ENCODE measurements at regions of chr20 and their contacts with region 1.

Region 1: DNA sequence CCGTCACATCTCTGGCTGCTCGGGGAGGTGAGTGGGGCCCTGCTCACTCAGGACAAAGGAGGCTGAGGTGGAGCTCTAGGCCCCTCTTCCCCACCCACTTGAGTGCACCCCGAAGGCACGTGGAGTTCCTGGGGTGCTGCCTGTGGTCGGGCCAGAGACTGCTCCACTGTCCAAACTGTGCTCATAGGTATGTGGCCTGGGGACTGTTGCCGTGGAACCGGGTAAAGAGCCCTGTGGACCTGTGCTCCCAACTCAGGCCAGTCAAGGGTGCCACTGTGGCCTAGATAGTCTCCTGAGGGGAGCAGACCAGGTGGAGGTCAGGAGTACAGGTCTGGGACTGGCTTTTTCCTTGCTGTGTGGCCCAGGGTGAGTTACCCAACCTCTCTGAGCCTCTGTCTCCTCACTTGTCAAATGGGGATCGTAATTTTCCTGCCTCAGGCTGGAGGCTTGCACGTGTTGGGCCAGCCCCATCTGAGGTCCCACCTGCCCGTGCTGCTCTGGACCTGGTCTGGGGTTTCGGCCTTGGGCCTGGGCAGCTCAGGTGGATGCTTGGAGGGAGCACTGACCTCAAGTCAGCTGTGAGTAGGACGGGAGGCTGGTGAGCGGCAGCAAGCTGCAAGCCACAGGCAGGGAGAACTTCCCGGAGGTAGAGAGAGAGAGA is 12.4 kb upstream of the NPBWR2 start:
- DNase-seq: no peak
- ATAC-seq: no peak
- H3K4me3 ChIP-seq: peak overlapping the region in 4 of 5 experiments; percentile 14 to 50 (median 40)
- H3K4me3 Mint-ChIP-seq: peak overlapping the region; percentile 77
- H3K27ac ChIP-seq: no peak overlapping the region
- H3K27ac Mint-ChIP-seq: peak overlapping the region; percentile 84
- H3K4me1 ChIP-seq: peaks cover 4 to 11% of the 10 kb centered on the region in 2 donors
- H3K4me1 Mint-ChIP-seq: peaks cover 8% of the 10 kb centered on the region
- H3K27me3 ChIP-seq: peaks cover 0 to 10% (median 0%) of the 10 kb centered on the region in 4 experiments
- H3K27me3 Mint-ChIP-seq: peaks cover 3% of the 10 kb centered on the region
- CTCF ChIP-seq: no peak

Region 2: DNA sequence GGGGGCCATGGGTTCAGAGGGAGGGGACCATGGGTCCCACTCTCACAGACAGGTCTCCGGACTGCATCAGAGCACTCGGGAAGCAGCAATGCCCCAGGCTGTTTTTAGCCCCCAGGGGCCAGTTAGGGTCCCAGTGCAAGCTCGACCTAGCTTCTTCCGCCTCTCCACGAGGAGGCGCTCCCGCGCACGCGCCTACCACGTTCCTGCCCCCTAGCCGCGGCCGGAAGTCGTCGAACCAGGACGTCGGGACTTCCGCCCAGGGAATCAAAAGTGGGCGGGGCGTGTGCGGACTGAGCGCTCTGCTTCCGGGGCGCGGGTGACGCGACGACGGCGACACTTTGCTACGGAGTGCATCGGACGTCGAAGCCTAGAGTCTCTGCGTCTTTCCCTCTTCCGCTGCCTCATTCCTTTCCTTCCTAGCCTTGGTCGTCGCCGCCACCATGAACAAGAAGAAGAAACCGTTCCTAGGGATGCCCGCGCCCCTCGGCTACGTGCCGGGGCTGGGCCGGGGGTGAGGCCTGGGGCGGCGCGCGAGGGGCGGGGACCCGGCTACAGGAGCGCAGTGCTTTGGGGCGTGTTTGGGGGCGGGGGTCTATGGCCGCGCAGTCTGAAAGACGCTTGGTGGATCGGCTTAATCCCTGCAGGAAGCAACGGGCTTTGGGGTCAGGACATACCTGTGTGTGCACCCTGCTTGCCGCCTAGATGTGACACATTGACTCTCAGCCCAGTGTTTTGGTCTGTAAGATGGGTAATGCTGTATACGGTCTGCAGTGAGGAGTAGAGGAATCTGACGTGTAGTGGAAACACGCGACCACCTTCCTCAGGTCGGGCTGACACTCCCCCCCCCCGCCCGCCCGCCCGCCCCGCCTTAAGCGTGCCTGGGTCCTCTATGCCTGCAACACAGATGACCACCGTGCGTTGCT is 138.7 kb before region 1 on chr20 and contains the start of gene PRPF6:
- CTCF ChIA-PET with region 1: interaction called, 25 read pairs
- POLR2A ChIA-PET with region 1: interaction called, 3 read pairs
- intact Hi-C with region 1: loop called (anchors 1 kb)
- DNase-seq: peak; percentile 96
- ATAC-seq: peak; percentile 72
- H3K4me3 ChIP-seq: peak within 1 kb of the TSS; percentile 63 to 85 (median 79)
- H3K4me3 Mint-ChIP-seq: peak within 1 kb of the TSS; percentile 90
- H3K27ac ChIP-seq: peak within 1 kb of the TSS; percentile 69 to 87
- H3K27ac Mint-ChIP-seq: peak within 1 kb of the TSS; percentile 94
- H3K4me1 ChIP-seq: peaks cover 30 to 46% of the 10 kb centered on the region in 2 donors
- H3K4me1 Mint-ChIP-seq: peaks cover 53% of the 10 kb centered on the region
- H3K27me3 ChIP-seq: no peaks in the 10 kb centered on the region
- H3K27me3 Mint-ChIP-seq: no peaks in the 10 kb centered on the region
- CTCF ChIP-seq: peak; percentile 86
- total RNA-seq, gene PRPF6: 79.7 and 82.9 TPM in 2 replicates

Region 3: GRCh38 chr20:64053841-64054661 is 65.8 kb before region 1 on chr20:
- CTCF ChIA-PET with region 1: interaction called, 10 read pairs
- POLR2A ChIA-PET with region 1: no interaction called
- intact Hi-C with region 1: no loop called
- DNase-seq: no peak
- ATAC-seq: no peak
- H3K4me3 ChIP-seq: no peak overlapping the region
- H3K4me3 Mint-ChIP-seq: no peak overlapping the region
- H3K27ac ChIP-seq: no peak overlapping the region
- H3K27ac Mint-ChIP-seq: no peak overlapping the region
- H3K4me1 ChIP-seq: peaks cover 20 to 26% of the 10 kb centered on the region in 2 donors
- H3K4me1 Mint-ChIP-seq: peaks cover 18% of the 10 kb centered on the region
- H3K27me3 ChIP-seq: peaks cover 0 to 68% (median 27%) of the 10 kb centered on the region in 4 experiments
- H3K27me3 Mint-ChIP-seq: peaks cover 27% of the 10 kb centered on the region
- CTCF ChIP-seq: no peak

Region 4: GRCh38 chr20:64069614-64070243 is 50.1 kb before region 1 on chr20:
- CTCF ChIA-PET with region 1: interaction called, 10 read pairs
- POLR2A ChIA-PET with region 1: interaction called, 7 read pairs
- intact Hi-C with region 1: no loop called
- DNase-seq: no peak
- ATAC-seq: no peak
- H3K4me3 ChIP-seq: no peak overlapping the region
- H3K4me3 Mint-ChIP-seq: no peak overlapping the region
- H3K27ac ChIP-seq: no peak overlapping the region
- H3K27ac Mint-ChIP-seq: no peak overlapping the region
- H3K4me1 ChIP-seq: peaks cover 44 to 83% of the 10 kb centered on the region in 2 donors
- H3K4me1 Mint-ChIP-seq: peaks cover 62% of the 10 kb centered on the region
- H3K27me3 ChIP-seq: no peaks in the 10 kb centered on the region
- H3K27me3 Mint-ChIP-seq: no peaks in the 10 kb centered on the region
- CTCF ChIP-seq: peak; percentile 73

Region 5: DNA sequence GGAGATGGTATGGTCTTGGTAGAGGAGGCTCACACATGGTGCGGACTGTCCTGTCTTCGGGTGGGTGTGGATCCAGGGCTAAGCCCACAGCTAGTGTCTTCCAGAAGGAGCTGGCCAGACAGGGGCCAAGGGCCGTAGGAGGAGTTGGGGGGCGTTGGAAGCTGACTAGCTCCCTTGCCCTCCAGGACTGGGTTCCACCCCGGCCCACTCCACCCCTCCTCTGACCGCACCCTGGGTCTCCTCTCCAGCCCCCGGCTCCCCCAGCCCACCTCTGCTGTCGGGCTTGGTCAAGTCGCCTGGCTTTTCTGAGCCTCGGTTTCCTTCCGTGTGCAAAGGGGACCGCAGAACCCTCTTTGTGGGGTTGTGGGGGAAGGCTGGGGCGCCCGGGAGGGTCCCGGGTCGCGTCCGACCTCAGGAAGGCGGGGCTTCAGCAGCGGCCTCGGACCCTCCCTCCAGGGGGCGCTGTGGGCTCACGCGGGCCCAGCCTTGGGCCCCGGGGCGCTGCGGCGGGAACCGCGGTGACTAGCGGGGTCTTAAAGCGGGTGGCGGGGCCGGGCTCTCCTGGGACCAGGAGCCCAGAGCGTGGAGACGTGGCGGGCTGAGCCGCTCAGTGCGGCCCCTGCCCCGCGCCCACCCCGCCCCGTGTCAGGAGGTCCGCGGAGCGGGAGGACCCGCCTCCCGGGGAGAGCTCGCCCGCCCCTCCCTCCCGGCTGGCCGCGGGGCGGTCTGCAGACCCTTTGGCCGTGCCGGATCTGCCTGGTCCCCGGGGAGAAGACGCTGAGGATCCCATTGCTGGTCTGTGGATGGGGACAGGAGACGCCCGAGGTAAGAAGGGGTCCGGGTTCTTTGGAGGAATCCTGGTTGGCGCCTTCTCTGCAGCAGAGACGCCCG is 17.8 kb before region 1 on chr20:
- CTCF ChIA-PET with region 1: interaction called, 50 read pairs
- POLR2A ChIA-PET with region 1: no interaction called
- intact Hi-C with region 1: loop called (anchors 1 kb)
- DNase-seq: peak; percentile 84
- ATAC-seq: peak; percentile 32
- H3K4me3 ChIP-seq: peak overlapping the region in 4 of 5 experiments; percentile 24 to 59 (median 55)
- H3K4me3 Mint-ChIP-seq: peak overlapping the region; percentile 92
- H3K27ac ChIP-seq: peak overlapping the region in 1 of 2 donors; percentile 89
- H3K27ac Mint-ChIP-seq: peak overlapping the region; percentile 95
- H3K4me1 ChIP-seq: peaks cover 27 to 43% of the 10 kb centered on the region in 2 donors
- H3K4me1 Mint-ChIP-seq: peaks cover 38% of the 10 kb centered on the region
- H3K27me3 ChIP-seq: peaks cover 0 to 21% (median 5%) of the 10 kb centered on the region in 4 experiments
- H3K27me3 Mint-ChIP-seq: no peaks in the 10 kb centered on the region
- CTCF ChIP-seq: peak; percentile 84

Measured in B cell (primary cell).